Activated CD8-positive, alpha-beta T cell treated with anti-CD3 and anti-CD28 coated beads, Interleukin-2, amount 10 ng/mL, durations not matched to agents 7 days and 5 days (primary cell): ENCODE measurements at regions of chr16 and their contacts with region 1.

Region 1: DNA sequence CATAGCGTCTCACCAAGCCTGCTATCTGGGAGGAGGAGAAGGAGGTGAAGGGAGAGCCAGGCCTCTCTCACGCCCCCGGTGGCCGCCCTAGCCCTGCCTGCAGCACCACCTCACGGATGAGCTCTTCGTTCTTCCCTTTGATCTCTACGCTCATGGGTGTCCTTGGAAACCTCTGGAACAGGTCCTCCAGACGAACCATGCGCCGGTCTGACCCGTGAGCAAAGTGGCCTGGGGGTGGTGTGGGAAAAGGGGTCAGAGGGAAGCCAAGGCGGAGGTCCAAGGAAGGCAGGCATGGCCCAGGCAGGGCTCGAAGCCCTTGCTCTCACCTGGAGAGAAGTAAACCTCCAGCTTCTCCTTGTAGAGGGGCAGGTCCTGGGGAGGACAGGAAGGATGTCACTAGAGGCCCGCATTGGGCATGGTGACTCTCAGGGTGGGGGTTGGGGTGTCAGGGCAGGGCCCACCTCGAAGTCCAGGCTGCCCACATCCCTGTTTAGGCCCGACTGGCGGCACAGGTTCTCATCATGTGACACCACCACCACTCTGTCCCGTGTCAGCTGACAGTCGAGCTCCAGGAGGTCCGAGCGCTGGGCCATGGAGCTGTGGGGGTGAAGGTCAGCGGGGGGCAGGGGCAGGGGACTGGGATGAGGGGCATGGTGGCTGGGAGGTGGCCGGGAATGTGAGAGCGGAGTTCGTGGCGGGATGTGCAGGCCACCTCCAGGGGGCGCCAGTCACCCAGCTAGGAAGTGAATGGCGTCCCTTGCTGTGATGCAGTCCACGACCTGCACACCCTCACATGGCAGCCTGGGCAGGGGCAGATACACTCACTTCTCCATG is 923 bp downstream of the GDPD3 start:
- DNase-seq: peak; percentile 67
- ATAC-seq: peak; percentile 78
- H3K4me3 Mint-ChIP-seq: no peak overlapping the region
- H3K27ac Mint-ChIP-seq: peak overlapping the region; percentile 60
- H3K4me1 Mint-ChIP-seq: peaks cover 21% of the 10 kb centered on the region
- H3K27me3 Mint-ChIP-seq: no peaks in the 10 kb centered on the region

Region 2: GRCh38 chr16:30122604-30123160 is 10.3 kb after region 1 on chr16:
- CTCF ChIA-PET with region 1: interaction called, 13 read pairs
- POLR2A ChIA-PET with region 1: no interaction called
- DNase-seq: peak; percentile 37
- ATAC-seq: peak; percentile 40
- H3K4me3 Mint-ChIP-seq: peak overlapping the region; percentile 86
- H3K27ac Mint-ChIP-seq: peak overlapping the region; percentile 83
- H3K4me1 Mint-ChIP-seq: peaks cover 36% of the 10 kb centered on the region
- H3K27me3 Mint-ChIP-seq: no peaks in the 10 kb centered on the region